ENCODE measurements at regions of chr4 and their contacts with region 1.

Region 1: DNA sequence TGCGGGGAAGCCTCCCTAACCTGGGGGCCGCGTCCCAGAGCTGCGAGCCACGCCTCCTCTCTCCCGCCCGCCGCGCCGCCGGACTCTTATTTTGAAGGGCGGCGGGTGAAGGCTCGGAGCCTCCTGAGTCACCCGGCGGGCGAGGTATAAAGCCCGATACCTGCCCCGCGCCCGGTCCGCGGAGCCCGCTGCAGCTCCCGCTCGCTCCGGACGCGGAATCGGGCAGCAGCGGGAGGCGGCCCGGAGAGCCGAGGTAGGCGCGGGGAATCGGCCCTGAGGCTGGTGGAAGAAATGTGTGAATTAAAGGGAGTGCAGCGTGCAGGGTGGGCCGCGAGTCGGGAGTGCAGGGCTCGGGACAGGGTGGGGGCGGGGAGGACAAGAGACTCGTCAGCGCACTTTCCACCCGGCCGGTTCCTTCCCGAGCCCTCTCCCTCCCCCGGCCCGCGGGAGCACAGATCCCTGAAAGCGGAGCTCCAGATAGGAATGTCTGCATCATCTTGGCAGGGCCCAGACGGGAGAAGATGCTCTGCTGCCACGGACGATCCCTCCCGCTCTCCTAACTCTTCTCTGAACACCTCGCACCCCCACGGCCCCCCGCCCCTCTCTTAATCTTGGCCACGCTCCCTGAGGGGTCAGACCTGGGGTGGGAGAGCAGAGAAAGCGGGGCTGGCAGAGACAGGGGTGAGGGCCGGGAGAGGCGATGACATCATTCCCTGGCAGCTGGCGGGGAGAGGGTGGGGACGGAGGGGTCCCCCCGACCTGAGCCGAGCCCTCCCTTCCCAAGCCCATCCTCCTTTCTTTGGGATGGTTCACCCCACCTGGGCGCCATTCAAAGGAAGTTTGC is 177.9 kb downstream of the CBR4 start:
- DNase-seq: peak; percentile 85
- H3K4me3 ChIP-seq: peak overlapping the region; percentile 63 to 85 (median 75)
- H3K27ac ChIP-seq: peak overlapping the region; percentile 90 to 93 (median 92)
- H3K4me1 ChIP-seq: peaks cover 0 to 14% (median 8%) of the 10 kb centered on the region in 4 donors
- H3K27me3 ChIP-seq: peaks cover 4% of the 10 kb centered on the region
- CTCF ChIP-seq: no peak
- EP300 ChIP-seq: no peak
- POLR2A ChIP-seq: peak; percentile 89

Region 2: DNA sequence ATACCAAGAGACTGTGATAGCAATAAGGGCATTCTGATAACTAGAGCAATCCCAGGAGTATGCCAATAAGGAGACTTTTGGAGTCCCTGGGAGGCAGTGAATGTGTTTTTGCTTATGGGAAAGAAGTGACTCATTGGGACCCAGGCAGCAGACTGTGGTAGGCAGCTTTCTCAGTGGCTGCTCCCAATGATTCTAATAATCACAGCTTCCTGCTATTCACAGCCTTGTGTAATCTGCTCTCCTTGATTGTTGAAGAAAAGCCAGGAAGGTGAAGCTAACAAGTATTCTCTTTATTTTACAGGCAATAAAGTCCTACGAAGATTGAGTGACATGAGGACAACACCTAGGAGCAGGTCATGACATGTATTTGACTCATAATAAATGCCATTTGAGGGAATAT is 443.3 kb before region 1 on chr4:
- in situ Hi-C with region 1: no loop called
- intact Hi-C with region 1: no loop called
- DNase-seq: no peak
- H3K4me3 ChIP-seq: no peak overlapping the region
- H3K27ac ChIP-seq: peak overlapping the region in 2 of 4 donors; percentile 3 to 35
- H3K4me1 ChIP-seq: peaks cover 0 to 39% (median 14%) of the 10 kb centered on the region in 4 donors
- H3K27me3 ChIP-seq: no peaks in the 10 kb centered on the region
- CTCF ChIP-seq: no peak
- EP300 ChIP-seq: no peak
- POLR2A ChIP-seq: no peak

Region 3: GRCh38 chr4:168815379-168816345 is 16.5 kb before region 1 on chr4:
- in situ Hi-C with region 1: no loop called
- intact Hi-C with region 1: loop called (anchors 2 kb)
- DNase-seq: no peak
- H3K4me3 ChIP-seq: no peak overlapping the region
- H3K27ac ChIP-seq: peak overlapping the region; percentile 81 to 86 (median 84)
- H3K4me1 ChIP-seq: peaks cover 5 to 39% (median 15%) of the 10 kb centered on the region in 4 donors
- H3K27me3 ChIP-seq: no peaks in the 10 kb centered on the region
- CTCF ChIP-seq: no peak
- EP300 ChIP-seq: peak; percentile 79
- POLR2A ChIP-seq: no peak

Region 4: DNA sequence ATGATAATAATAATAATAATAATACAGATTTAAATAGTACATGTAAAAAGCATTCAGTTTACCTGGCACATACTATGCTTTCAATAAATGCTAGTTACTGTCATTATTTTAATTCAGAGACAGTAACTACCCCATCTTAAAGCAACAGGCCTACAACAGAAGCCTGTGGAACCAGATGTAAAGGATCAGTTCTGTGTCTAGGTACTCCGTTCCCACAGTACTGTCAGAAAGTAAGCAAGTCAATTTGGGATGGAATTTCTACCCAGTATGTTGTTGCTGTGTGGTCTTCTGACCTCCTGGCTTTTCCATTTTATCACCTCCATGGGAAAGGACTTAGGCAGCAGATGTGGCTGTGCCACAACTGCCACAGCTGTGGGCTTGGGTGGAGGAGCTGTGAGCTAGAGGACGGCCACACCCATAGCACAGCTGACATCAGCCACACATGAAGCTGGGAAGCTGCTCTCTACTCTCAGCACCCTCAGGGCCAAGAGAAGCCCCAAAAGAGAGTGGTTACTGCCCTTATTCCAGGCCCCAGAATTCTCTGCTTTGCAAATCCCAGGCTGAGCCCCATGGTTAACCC is 75.1 kb after region 1 on chr4:
- in situ Hi-C with region 1: no loop called
- intact Hi-C with region 1: no loop called
- DNase-seq: no peak
- H3K4me3 ChIP-seq: no peak overlapping the region
- H3K27ac ChIP-seq: peak overlapping the region; percentile 43 to 73 (median 58)
- H3K4me1 ChIP-seq: peaks cover 4 to 31% (median 14%) of the 10 kb centered on the region in 4 donors
- H3K27me3 ChIP-seq: no peaks in the 10 kb centered on the region
- CTCF ChIP-seq: no peak
- EP300 ChIP-seq: no peak
- POLR2A ChIP-seq: no peak

Measured in transverse colon (tissue), 4 donors.